ENCODE measurements at regions of chr17 and their contacts with region 1.

Region 1: DNA sequence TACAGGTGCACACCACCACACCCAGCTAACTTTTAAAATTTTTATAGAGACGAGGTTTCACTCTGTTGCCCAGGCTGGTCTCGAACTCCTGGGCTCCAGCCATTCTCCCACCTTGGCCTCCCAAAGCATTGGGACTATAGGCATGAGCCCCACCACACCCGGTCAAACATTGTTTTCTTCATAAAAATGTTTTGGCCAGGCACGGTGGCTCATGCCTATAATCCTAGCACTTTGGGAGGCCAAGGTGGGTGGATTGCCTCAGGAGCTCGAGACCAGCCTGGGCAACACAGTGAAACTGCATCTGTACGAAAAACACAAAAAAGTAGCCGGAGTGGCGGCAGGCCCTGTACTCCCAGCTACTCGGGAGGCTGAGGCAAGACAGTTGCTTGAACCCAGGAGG is 12.1 kb downstream of the TMC6 start:
- DNase-seq: no peak
- H3K27ac ChIP-seq: no peak overlapping the region
- CTCF ChIP-seq: no peak

Region 2: GRCh38 chr17:78058001-78058400 is 58.4 kb before region 1 on chr17:
- CTCF ChIA-PET with region 1: no interaction called
- POLR2A ChIA-PET with region 1: no interaction called
- DNase-seq: no peak
- H3K27ac ChIP-seq: no peak overlapping the region
- CTCF ChIP-seq: no peak

Region 3: GRCh38 chr17:78075545-78075944 is 40.9 kb before region 1 on chr17:
- CTCF ChIA-PET with region 1: no interaction called
- POLR2A ChIA-PET with region 1: no interaction called
- DNase-seq: no peak
- H3K27ac ChIP-seq: no peak overlapping the region
- CTCF ChIP-seq: no peak

Region 4: GRCh38 chr17:78127239-78128085 is 11.1 kb after region 1 on chr17:
- CTCF ChIA-PET with region 1: interaction called, 9 read pairs
- POLR2A ChIA-PET with region 1: interaction called, 11 read pairs
- DNase-seq: no peak
- H3K27ac ChIP-seq: peak overlapping the region; percentile 68
- CTCF ChIP-seq: no peak

Region 5: DNA sequence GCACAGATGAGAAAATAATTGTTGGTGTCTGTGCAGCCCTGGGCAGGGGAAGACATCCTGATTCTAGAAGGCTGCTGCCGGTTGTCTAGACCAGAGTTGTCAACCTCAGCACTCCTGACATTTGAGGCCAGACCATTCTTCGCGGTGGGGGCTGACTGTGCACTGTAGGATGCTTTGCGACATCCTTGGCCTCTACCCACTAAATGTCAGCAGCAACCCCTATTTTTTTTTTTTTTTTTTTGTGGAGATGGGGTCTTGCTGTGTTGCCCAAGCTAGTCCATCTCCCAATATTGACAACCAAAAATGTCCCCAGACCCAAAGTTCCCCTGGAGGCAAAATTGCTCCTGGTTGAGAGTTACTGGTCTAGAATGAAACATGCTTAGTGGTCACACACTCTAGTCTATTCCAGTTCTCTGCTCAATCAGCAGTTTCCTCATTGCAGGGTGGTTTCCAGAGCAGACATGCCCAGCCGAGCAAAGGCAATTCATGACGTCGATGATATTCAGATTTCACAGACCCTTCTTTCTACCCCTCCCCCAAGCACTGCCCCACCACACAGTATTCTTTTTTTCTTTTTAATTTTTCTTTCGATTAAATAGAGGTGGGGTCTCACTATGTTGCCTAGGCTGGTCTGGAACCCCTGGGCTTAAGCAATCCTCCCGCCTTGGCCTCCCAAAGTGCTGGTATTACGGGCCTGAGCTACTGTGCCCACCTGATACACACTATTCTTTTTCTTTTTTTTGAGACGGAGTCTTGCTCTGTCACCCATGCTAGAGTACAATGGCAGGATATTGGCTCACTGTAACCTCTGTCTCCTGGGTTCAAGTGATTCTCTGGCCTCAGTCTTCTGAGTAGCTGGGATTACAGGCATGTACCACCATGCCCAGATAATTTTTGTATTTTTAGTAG is 38.7 kb after region 1 on chr17:
- CTCF ChIA-PET with region 1: no interaction called
- POLR2A ChIA-PET with region 1: no interaction called
- DNase-seq: no peak
- H3K27ac ChIP-seq: peak overlapping the region; percentile 15
- CTCF ChIP-seq: no peak

Measured in RWPE1 (cell line).